ENCODE measurements at regions of chr11 and their contacts with region 1.

Region 1: GRCh38 chr11:10540923-10541560 is at the start of gene RNF141:
- DNase-seq: peak; percentile 97
- H3K4me3 ChIP-seq: peak within 1 kb of the TSS; percentile 72 to 89
- H3K27ac ChIP-seq: peak within 1 kb of the TSS; percentile 77 to 91
- H3K4me1 ChIP-seq: peaks cover 7 to 11% of the 10 kb centered on the region in 2 experiments; a peak in 3 of 4 replicates
- H3K27me3 ChIP-seq: no peaks in the 10 kb centered on the region
- CTCF ChIP-seq: peak; percentile 74
- EP300 ChIP-seq: 0 out of 4 replicates have a peak, but pooled peaks of 1 of the 2 experiments have one; percentile 19
- RAD21 ChIP-seq: peak; percentile 53
- polyA plus RNA-seq, gene RNF141: 6.9 and 10.3 TPM in 2 replicates

Region 2: DNA sequence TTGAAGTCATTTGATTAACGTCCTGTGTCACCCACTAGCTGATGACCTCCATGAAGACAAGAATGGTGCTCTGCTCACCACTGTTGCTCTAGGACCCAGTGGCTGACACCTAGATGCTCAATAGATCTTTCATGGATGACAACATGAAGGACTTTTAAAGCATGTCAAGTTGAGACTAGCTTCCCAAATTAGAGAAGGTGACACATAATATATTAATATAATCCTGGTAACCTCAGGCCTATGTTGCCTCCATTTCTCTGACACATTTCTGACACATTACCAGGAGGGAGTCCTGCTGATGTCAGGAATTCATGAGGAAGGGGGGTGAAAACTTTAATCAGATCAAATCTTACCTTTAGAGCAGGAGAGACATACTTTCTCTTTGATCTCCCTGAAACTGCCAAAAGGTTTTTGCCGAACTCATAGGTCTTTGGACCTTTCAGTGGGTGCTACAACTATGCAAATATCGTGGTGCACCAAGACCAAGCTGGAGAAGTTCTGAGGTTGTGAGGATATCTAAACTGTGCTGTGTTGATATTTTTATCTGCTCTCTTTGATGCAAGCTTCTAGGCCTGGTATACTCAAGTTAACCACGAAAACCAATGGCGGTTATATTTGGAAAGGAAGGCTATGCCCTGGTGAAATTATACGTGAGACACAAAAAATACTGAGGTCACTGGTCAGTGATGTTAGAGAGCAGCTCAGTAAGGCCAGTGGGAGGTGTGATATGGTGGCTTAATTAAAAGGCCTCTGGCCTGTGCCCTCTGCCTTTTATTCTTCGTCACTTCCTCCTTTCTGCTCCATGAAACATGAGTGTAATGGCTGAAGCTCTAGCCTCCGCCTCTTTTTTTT is 99.2 kb before region 1 on chr11:
- CTCF ChIA-PET with region 1: no interaction called
- POLR2A ChIA-PET with region 1: no interaction called
- DNase-seq: no peak
- H3K4me3 ChIP-seq: no peak overlapping the region
- H3K27ac ChIP-seq: no peak overlapping the region
- H3K4me1 ChIP-seq: peaks cover 0 to 19% of the 10 kb centered on the region in 2 experiments; a peak in 1 of 4 replicates
- H3K27me3 ChIP-seq: no peaks in the 10 kb centered on the region
- CTCF ChIP-seq: no peak
- EP300 ChIP-seq: no peak
- RAD21 ChIP-seq: no peak

Region 3: GRCh38 chr11:10518123-10518522 is 22.9 kb before region 1 on chr11:
- CTCF ChIA-PET with region 1: interaction called, 10 read pairs
- POLR2A ChIA-PET with region 1: no interaction called
- DNase-seq: no peak
- H3K4me3 ChIP-seq: no peak overlapping the region
- H3K27ac ChIP-seq: no peak overlapping the region
- H3K4me1 ChIP-seq: peaks cover 0 to 9% of the 10 kb centered on the region in 2 experiments; a peak in 1 of 4 replicates
- H3K27me3 ChIP-seq: no peaks in the 10 kb centered on the region
- CTCF ChIP-seq: no peak
- EP300 ChIP-seq: no peak
- RAD21 ChIP-seq: no peak

Region 4: GRCh38 chr11:10551290-10551592 is 10.2 kb after region 1 on chr11:
- CTCF ChIA-PET with region 1: no interaction called
- POLR2A ChIA-PET with region 1: no interaction called
- DNase-seq: no peak
- H3K4me3 ChIP-seq: no peak overlapping the region
- H3K27ac ChIP-seq: peak overlapping the region in 1 of 2 experiments; percentile 68; a peak in 2 of 4 replicates
- H3K4me1 ChIP-seq: peaks cover 0 to 7% of the 10 kb centered on the region in 2 experiments; a peak in 1 of 4 replicates
- H3K27me3 ChIP-seq: no peaks in the 10 kb centered on the region
- CTCF ChIP-seq: no peak
- EP300 ChIP-seq: no peak
- RAD21 ChIP-seq: no peak

Region 5: GRCh38 chr11:10564696-10565318 is 23.8 kb after region 1 on chr11:
- CTCF ChIA-PET with region 1: interaction called, 10 read pairs
- POLR2A ChIA-PET with region 1: no interaction called
- DNase-seq: no peak
- H3K4me3 ChIP-seq: no peak overlapping the region
- H3K27ac ChIP-seq: no peak overlapping the region
- H3K4me1 ChIP-seq: no peaks in the 10 kb centered on the region
- H3K27me3 ChIP-seq: no peaks in the 10 kb centered on the region
- CTCF ChIP-seq: peak; percentile 41
- EP300 ChIP-seq: no peak
- RAD21 ChIP-seq: 0 out of 2 replicates have a peak, but pooled peaks have one; percentile 4